Caco-2 (cell line): ENCODE measurements at regions of chr7 and their contacts with region 1.

Region 1: DNA sequence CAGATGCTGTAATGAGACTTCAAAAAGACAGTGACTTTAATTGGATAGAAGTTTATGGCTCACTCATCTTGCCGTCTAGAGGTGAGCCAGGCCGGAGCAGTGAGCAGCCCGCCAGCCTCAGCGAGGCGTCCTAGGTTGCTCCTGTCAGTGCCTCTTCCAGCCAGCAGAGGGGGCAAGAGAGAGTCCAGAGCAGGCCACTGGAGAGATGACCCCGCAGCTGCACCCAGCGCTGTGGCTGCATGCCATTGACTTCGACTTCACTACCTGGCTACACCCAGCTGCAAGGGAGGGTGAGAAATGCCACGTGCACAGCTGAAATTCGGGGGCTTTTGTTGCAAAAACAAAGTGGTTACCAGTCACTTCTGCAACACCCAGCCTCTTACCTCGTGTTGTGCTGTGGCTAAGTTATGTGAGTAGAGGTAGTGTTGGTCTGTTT is 26.5 kb downstream of the NUB1 start:
- DNase-seq: peak; percentile 89 to 90
- H3K4me3 ChIP-seq: no peak overlapping the region
- H3K4me3 Mint-ChIP-seq: no peak overlapping the region
- H3K27ac Mint-ChIP-seq: no peak overlapping the region
- H3K4me1 ChIP-seq: 0 out of 2 replicates have a peak, but pooled peaks cover 7% of the 10 kb centered on the region
- H3K4me1 Mint-ChIP-seq: no peaks in the 10 kb centered on the region
- H3K27me3 ChIP-seq: no peaks in the 10 kb centered on the region
- H3K27me3 Mint-ChIP-seq: no peaks in the 10 kb centered on the region
- CTCF ChIP-seq: peak; percentile 93 to 95

Region 2: GRCh38 chr7:151410405-151411390 is 42.5 kb after region 1 on chr7:
- CTCF ChIA-PET with region 1: no interaction called
- POLR2A ChIA-PET with region 1: no interaction called
- intact Hi-C with region 1: loop called (anchors 2 kb)
- DNase-seq: peak in 1 of 2 experiments; percentile 29
- H3K4me3 ChIP-seq: peak overlapping the region; percentile 54
- H3K4me3 Mint-ChIP-seq: peak overlapping the region; percentile 60
- H3K27ac Mint-ChIP-seq: no peak overlapping the region
- H3K4me1 ChIP-seq: no peaks in the 10 kb centered on the region
- H3K4me1 Mint-ChIP-seq: no peaks in the 10 kb centered on the region
- H3K27me3 ChIP-seq: no peaks in the 10 kb centered on the region
- H3K27me3 Mint-ChIP-seq: peaks cover 3% of the 10 kb centered on the region
- CTCF ChIP-seq: no peak

Region 3: DNA sequence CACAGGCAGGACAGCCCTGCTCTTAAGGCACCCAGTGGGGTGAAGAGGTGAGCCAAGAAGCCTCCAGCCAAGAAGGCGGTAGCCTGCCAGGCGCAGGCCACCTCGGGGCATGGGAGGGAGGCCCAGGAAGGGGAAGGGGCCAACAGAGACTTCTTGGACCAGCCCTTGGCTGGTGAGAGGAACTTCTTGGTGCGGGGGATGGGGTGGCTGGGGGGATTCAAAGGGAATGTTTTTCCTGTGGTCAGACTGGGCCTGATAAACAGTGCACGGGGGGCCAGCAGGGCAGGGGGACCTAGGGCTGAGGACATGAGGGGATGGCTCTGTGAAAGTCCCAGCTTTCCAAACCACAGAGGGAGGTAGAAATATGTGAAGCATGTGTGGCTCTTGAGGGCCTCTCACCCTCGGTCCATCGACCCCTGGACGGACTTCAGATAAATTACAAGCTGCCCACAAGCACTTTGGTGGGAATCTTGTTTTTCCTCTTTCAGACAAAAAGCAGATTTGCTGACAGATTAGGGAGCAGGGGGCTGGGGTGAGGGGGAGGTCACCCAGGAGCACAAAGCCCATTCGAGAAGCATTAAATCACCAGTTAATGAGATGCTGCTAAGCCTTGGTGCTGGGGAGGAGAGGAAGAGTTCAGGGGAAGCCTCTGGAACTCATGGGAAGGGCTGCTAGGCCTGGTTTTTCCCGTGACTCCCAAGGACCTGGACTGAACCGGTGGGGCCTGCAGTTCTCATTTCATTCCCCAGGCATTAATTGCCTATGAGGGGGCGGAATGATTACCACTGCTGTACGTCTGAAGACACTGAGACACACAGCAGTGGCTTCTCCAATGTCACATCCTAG is 60.4 kb after region 1 on chr7:
- CTCF ChIA-PET with region 1: no interaction called
- POLR2A ChIA-PET with region 1: no interaction called
- intact Hi-C with region 1: loop called (anchors 1 kb)
- DNase-seq: peak; percentile 71 to 86
- H3K4me3 ChIP-seq: no peak overlapping the region
- H3K4me3 Mint-ChIP-seq: peak overlapping the region; percentile 39
- H3K27ac Mint-ChIP-seq: peak overlapping the region; percentile 94
- H3K4me1 ChIP-seq: peaks cover 33% of the 10 kb centered on the region
- H3K4me1 Mint-ChIP-seq: peaks cover 25% of the 10 kb centered on the region
- H3K27me3 ChIP-seq: no peaks in the 10 kb centered on the region
- H3K27me3 Mint-ChIP-seq: no peaks in the 10 kb centered on the region
- CTCF ChIP-seq: no peak

Region 4: GRCh38 chr7:151448261-151449252 is 80.4 kb after region 1 on chr7:
- CTCF ChIA-PET with region 1: interaction called, 3 read pairs
- POLR2A ChIA-PET with region 1: no interaction called
- intact Hi-C with region 1: loop called (anchors 2 kb)
- DNase-seq: peak in 1 of 2 experiments; percentile 52
- H3K4me3 ChIP-seq: no peak overlapping the region
- H3K4me3 Mint-ChIP-seq: no peak overlapping the region
- H3K27ac Mint-ChIP-seq: no peak overlapping the region
- H3K4me1 ChIP-seq: no peaks in the 10 kb centered on the region
- H3K4me1 Mint-ChIP-seq: peaks cover 10% of the 10 kb centered on the region
- H3K27me3 ChIP-seq: no peaks in the 10 kb centered on the region
- H3K27me3 Mint-ChIP-seq: no peaks in the 10 kb centered on the region
- CTCF ChIP-seq: peak; percentile 27 to 36

Region 5: DNA sequence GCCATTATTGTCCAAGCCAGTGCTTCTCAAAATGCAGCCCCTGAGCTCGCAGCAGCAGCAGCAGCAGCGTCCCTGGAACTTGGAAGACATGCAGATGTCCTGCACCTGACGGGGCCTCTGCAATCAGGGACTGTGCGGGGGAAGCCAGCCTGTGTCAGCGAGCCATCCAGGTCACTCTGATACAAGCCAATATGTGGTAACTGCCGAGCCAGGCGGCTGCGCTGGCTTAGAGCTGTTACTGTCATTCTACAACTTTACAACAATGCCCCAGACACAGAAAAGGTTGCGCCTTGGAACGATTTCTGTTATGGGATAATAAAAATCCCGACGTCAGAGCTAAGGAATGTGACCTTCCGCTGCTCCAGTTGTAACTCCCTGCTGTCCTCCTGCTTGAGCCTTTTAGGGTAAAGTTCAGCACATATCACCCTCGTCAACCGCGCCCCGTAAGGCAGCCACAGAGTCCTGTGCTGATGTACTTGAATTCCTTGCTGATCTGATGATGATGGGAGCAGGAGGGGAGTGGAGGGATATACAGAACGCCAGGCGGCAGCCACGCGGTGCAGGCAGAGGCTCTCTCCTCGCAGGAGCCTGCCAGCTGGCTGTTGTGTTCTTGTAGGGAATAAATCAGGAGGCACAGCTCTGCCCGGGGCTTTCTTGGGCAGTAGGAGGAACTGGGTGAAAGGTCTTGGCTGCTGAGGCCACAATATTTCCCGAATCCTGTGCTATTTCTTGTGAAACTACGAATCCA is 91.7 kb after region 1 on chr7:
- CTCF ChIA-PET with region 1: no interaction called
- POLR2A ChIA-PET with region 1: no interaction called
- intact Hi-C with region 1: loop called (anchors 1 kb)
- DNase-seq: peak; percentile 90 to 97
- H3K4me3 ChIP-seq: peak overlapping the region; percentile 25
- H3K4me3 Mint-ChIP-seq: peak overlapping the region; percentile 78
- H3K27ac Mint-ChIP-seq: peak overlapping the region; percentile 96
- H3K4me1 ChIP-seq: peaks cover 24% of the 10 kb centered on the region
- H3K4me1 Mint-ChIP-seq: peaks cover 19% of the 10 kb centered on the region
- H3K27me3 ChIP-seq: no peaks in the 10 kb centered on the region
- H3K27me3 Mint-ChIP-seq: no peaks in the 10 kb centered on the region
- CTCF ChIP-seq: peak in 1 of 2 experiments; percentile 60

Region 6: DNA sequence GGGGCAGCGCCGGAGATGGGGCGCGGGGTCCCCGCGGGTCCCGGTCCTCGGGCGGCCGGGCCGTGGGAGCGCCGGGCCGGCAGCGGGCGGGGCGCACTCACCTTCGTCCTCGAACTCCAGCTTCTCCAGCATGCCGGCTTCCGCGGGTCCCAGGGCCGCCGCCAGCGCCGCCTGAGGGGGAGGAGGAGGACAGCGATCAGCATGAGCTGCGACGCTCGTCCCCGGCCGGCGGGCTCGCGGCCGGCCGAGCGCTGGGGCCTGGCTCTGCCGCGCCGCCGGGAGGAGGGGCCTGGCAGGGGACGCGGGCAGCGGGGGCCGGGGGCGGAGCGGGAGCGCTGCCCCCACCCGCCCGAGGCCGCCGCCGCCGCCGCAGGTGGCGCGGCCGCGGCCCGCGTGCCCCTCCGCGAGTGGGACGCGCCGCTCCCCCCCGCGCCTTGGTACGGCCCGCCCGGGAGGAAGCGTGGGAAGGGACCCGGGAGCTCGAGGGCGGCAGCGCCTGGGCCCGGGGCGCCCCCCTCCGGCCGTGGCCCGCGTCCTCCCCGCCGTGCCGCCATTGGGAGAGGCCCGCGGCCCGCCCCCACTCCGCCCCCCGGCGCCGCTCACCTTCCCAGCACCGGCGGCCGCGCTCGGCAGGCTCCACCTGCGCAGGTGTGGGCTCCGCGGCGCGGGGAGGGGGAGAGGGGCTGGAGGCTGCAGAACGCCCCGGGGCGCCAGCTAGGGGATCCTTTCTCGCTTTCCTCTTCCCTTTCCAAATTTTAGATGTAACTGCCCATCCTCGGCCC is 264.0 kb after region 1 on chr7:
- CTCF ChIA-PET with region 1: no interaction called
- POLR2A ChIA-PET with region 1: no interaction called
- intact Hi-C with region 1: loop called (anchors 5 kb)
- DNase-seq: peak; percentile 89 to 94
- H3K4me3 ChIP-seq: peak overlapping the region; percentile 85
- H3K4me3 Mint-ChIP-seq: peak overlapping the region; percentile 88
- H3K27ac Mint-ChIP-seq: peak overlapping the region; percentile 62
- H3K4me1 ChIP-seq: peaks cover 11% of the 10 kb centered on the region
- H3K4me1 Mint-ChIP-seq: peaks cover 6% of the 10 kb centered on the region
- H3K27me3 ChIP-seq: no peaks in the 10 kb centered on the region
- H3K27me3 Mint-ChIP-seq: no peaks in the 10 kb centered on the region
- CTCF ChIP-seq: peak; percentile 42 to 50

Region 7: GRCh38 chr7:151759591-151760042 is 391.5 kb after region 1 on chr7:
- CTCF ChIA-PET with region 1: no interaction called
- POLR2A ChIA-PET with region 1: no interaction called
- intact Hi-C with region 1: loop called (anchors 1 kb)
- DNase-seq: peak; percentile 82 to 85
- H3K4me3 ChIP-seq: no peak overlapping the region
- H3K4me3 Mint-ChIP-seq: no peak overlapping the region
- H3K27ac Mint-ChIP-seq: peak overlapping the region; percentile 37
- H3K4me1 ChIP-seq: peaks cover 18% of the 10 kb centered on the region
- H3K4me1 Mint-ChIP-seq: peaks cover 15% of the 10 kb centered on the region
- H3K27me3 ChIP-seq: no peaks in the 10 kb centered on the region
- H3K27me3 Mint-ChIP-seq: no peaks in the 10 kb centered on the region
- CTCF ChIP-seq: peak; percentile 91 to 94